A673 (cell line): ENCODE measurements at regions of chr12 and their contacts with region 1.

Region 1: DNA sequence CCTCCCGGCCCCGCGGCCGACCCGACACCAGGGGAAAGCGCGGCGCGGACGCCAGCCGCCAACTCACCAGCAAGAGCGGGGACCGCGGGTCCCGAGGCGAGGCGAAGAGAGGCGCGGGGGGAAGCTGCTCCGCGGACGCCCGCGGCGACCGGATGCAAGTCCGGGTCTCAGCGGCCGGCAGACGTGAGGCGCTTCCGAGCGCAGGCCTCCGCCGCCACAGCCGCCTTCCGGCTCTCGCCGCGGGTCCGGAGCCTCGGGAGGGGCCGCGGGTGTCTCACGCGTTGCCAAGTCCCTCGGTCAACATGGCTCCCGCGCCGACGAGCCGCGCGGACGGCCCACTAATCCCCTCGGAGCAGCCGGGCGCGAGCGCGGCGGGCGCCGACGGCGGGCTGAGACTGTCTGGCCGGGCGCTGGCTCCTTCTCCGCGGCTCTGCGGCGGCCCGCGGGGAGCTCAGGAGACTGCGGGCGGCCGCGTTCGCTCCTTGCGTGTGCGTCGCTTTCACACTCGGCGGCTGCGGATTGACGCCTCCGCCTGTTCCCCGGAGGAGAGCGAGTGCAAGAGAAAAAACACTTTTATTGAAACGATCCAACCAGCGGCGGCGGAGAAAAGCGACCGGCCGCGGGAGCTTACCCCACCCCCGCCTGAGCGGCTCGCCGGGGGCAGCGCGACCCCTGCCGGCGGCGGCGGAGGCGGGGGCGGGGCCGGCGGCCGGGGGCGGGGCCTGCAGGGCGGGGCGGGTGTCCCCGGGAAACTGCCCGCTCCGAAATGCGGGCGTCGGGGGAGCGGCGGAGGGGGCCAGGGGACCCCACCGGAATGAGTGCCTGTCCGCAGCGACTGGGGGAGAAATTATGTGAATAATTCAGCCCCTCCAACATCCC is at the start of gene CDK17:
- DNase-seq: peak; percentile 93
- H3K4me3 ChIP-seq: peak within 1 kb of the TSS; percentile 86
- H3K27ac ChIP-seq: peak within 1 kb of the TSS; percentile 98
- H3K4me1 ChIP-seq: peaks cover 28% of the 10 kb centered on the region
- H3K27me3 ChIP-seq: no peaks in the 10 kb centered on the region
- CTCF ChIP-seq: peak; percentile 39
- total RNA-seq, gene CDK17: 33.2 and 34.8 TPM in 2 replicates

Region 2: GRCh38 chr12:96061864-96062453 is 338.2 kb before region 1 on chr12:
- CTCF ChIA-PET with region 1: no interaction called
- POLR2A ChIA-PET with region 1: interaction called, 3 read pairs
- intact Hi-C with region 1: loop called (anchors 2 kb)
- DNase-seq: peak; percentile 88
- H3K4me3 ChIP-seq: no peak overlapping the region
- H3K27ac ChIP-seq: no peak overlapping the region
- H3K4me1 ChIP-seq: no peaks in the 10 kb centered on the region
- H3K27me3 ChIP-seq: no peaks in the 10 kb centered on the region
- CTCF ChIP-seq: peak; percentile 85

Region 3: DNA sequence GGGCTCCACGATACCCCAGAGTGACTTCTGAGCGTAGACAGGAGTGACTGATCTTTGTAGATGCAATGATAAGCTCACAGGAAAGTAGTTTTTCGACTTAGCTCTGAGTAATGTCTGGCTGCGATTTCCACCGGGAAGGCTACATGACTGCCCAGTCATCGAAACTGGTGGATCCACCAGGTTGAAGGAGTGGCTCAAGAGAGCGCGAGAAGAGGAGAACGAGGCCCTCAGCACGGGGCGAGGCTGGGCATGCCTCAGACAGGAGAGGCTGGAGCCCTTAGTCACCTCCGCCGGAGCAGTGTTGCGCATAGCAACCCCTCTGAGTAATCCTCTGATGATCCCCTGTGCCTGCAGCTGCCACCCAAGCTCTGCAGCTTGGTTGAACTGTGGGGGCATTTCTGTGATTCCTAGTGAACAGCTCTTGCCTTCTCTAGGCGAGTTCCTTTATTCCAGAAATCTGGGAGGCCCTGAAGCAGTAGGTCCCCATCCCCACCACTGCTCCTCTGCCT is 180.4 kb before region 1 on chr12:
- CTCF ChIA-PET with region 1: interaction called, 3 read pairs
- POLR2A ChIA-PET with region 1: interaction called, 4 read pairs
- intact Hi-C with region 1: loop called (anchors 5 kb)
- DNase-seq: no peak
- H3K4me3 ChIP-seq: no peak overlapping the region
- H3K27ac ChIP-seq: no peak overlapping the region
- H3K4me1 ChIP-seq: peaks cover 8% of the 10 kb centered on the region
- H3K27me3 ChIP-seq: no peaks in the 10 kb centered on the region
- CTCF ChIP-seq: no peak

Region 4: DNA sequence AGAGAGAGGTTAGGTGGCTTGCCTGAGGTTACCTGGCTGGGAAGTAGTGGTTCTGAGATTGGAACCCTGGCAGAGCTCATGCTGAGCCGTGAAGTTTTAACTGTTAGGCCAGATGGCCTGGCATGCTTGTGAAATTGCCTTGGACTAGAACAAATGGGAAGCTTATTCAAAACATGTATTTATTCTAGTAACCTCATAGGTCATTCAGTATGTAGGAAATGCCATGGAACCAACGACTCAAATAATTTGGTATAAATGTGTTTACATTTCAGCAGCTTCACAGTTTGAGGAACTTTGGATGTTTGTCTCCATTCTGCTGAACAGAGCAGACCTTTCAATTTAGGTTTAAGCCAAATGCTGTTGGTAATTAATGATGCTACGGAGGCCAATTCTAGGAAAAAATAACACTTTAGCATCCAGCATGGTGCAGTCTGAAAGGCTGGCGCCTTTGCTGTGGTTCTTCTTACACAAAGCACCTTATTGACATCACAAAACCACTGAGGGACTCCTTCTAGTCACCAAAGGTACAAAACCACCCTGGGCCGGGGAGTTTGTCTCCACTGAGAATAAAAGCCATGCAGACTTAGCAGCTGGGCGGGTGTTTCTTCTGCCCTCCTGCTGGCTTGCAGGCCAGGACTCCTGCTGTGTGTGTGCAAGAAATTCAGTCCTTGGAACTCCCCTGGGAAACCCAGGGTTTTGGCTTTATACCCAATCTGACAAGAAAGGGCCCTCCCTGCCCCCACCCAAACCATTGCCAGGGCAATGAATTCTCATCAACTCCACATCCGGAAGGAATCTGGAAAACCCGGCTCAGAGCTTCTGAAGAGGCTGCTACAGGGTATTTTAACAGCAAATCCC is 141.8 kb before region 1 on chr12:
- CTCF ChIA-PET with region 1: no interaction called
- POLR2A ChIA-PET with region 1: no interaction called
- intact Hi-C with region 1: loop called (anchors 10 kb)
- DNase-seq: peak; percentile 93
- H3K4me3 ChIP-seq: no peak overlapping the region
- H3K27ac ChIP-seq: peak overlapping the region; percentile 75
- H3K4me1 ChIP-seq: peaks cover 32% of the 10 kb centered on the region
- H3K27me3 ChIP-seq: no peaks in the 10 kb centered on the region
- CTCF ChIP-seq: no peak

Region 5: DNA sequence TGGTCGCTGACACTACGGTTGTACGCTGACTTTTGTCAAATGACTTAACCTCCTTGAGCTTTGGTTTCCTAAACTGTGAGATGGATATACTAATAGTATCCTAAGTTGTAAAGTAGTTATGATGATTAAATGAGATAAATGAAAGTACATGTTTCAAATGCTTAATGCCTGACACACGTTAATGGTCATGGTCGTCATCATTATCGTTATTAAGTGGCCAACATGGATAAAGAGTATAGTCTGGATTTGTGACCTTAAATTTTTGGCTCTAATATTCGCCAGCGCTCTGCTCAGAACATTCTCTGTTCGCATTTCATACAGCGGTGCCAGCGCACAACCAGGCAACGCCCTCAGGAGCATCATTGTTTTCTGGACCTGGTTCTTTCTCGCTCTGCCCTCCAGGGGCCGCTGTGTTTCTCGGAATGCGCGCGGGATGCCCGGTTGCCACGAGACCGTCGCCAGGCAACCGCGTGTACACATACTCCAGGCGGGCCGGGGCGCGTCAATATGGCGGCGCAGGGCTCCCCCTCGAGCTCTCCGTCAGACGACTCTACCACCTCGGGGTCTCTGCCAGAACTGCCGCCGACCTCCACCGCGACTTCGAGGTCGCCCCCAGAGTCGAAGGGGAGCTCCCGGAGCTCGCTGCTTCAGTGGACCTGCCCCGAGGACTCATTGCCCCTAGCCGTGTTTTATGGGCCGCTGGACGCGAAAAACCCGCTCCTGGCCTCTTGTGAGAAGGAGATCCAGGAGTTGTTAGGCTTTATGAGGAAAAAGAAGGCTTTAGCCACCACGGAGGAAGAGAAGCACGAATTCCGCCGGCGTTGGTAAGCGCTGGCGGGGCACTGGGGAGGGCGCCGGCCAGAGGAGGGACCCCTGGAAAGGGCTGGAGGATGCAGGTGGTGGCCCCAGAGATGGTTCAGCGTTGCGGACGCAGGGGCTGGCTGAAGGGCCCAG is 89.2 kb after region 1 on chr12 and contains the start of gene CFAP54:
- CTCF ChIA-PET with region 1: interaction called, 7 read pairs
- POLR2A ChIA-PET with region 1: no interaction called
- intact Hi-C with region 1: loop called (anchors 5 kb)
- DNase-seq: peak; percentile 98
- H3K4me3 ChIP-seq: peak within 1 kb of the TSS; percentile 74
- H3K27ac ChIP-seq: peak within 1 kb of the TSS; percentile 61
- H3K4me1 ChIP-seq: no peaks in the 10 kb centered on the region
- H3K27me3 ChIP-seq: no peaks in the 10 kb centered on the region
- CTCF ChIP-seq: peak; percentile 95
- total RNA-seq, gene CFAP54: 0.71 and 1.5 TPM in 2 replicates